Aorta (tissue), 5 donors: ENCODE measurements at regions of chr3 and their contacts with region 1.

Region 1: DNA sequence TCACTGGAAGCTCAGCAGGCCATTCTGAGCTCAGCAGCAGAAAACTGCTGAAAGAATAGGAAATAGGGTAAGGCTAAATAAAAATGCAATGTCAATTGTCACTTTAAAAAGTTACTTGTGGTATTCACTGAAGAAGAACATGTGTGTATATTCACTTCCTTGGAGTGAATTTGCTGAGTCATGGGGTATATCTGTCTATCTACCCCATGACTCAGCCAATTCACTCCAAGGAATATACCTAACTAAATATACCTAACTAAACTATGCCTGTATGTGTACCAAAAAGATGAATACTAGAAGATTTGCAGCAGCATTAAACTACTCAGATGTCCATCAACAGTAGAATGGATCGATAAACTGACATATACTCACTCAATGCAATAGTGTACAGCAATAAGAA is 69.5 kb upstream of the KCNAB1 start:
- DNase-seq: no peak
- ATAC-seq: no peak
- H3K4me3 ChIP-seq: no peak overlapping the region
- H3K27ac ChIP-seq: no peak overlapping the region
- H3K4me1 ChIP-seq: no peaks in the 10 kb centered on the region
- H3K27me3 ChIP-seq: no peaks in the 10 kb centered on the region

Region 2: DNA sequence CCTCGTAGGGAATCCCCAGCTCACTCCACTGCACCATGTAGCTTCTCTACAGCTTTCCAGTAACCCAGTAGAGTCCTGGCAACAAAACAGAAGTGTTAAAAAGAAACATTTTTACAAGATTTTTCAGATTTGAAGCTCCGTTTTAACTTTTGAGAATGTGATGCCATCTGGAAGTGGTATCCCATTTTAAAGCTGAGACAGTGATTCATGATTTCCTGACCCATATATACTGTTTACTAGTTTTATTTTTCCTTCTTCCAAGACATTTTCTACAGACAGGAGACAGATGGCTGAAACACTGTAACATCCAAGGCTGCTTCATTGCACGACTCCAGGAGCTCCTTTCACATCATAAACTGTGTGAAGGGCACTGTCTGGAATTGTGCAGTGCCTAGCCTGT is 39.2 kb after region 1 on chr3:
- intact Hi-C with region 1: no loop called
- DNase-seq: no peak
- ATAC-seq: no peak
- H3K4me3 ChIP-seq: no peak overlapping the region
- H3K27ac ChIP-seq: no peak overlapping the region
- H3K4me1 ChIP-seq: peaks cover 0 to 6% of the 10 kb centered on the region in 2 donors
- H3K27me3 ChIP-seq: no peaks in the 10 kb centered on the region

Region 3: DNA sequence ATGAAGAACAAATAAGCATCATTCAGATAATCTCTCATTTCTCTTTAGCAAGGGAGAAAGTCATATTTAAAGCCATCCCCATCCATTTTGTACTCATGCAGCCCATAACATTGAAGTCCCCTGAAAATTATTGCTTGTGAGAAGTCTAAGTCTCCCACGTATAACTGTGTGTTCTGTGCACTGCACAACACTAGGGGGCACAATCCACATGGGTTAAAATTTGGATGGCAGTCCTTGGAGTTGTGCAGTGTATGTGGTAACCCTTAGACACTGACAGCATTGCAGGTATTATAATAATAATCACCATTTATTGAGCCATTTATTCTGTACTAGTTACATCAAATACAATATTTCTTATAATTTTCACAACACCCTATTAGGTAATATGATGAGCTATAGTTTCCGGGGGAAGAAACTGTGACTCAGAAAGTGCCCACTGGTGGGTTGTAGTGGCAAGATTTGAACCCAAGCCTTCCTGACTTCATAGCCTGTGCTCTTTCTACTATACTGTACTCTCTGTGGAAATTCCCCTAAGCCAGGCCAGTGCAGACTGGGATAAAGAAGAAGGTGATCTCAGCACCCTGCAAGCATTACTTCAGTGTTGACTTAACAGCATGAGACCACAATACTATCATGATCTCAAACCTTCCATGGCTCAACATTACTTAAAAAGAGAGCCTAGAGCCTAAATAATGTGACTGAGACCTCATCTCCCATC is 85.2 kb after region 1 on chr3:
- intact Hi-C with region 1: loop called in 1 of 2 experiments (anchors 5 kb)
- DNase-seq: no peak
- ATAC-seq: no peak
- H3K4me3 ChIP-seq: no peak overlapping the region
- H3K27ac ChIP-seq: no peak overlapping the region
- H3K4me1 ChIP-seq: peaks cover 4 to 7% of the 10 kb centered on the region in 2 donors
- H3K27me3 ChIP-seq: no peaks in the 10 kb centered on the region

Region 4: DNA sequence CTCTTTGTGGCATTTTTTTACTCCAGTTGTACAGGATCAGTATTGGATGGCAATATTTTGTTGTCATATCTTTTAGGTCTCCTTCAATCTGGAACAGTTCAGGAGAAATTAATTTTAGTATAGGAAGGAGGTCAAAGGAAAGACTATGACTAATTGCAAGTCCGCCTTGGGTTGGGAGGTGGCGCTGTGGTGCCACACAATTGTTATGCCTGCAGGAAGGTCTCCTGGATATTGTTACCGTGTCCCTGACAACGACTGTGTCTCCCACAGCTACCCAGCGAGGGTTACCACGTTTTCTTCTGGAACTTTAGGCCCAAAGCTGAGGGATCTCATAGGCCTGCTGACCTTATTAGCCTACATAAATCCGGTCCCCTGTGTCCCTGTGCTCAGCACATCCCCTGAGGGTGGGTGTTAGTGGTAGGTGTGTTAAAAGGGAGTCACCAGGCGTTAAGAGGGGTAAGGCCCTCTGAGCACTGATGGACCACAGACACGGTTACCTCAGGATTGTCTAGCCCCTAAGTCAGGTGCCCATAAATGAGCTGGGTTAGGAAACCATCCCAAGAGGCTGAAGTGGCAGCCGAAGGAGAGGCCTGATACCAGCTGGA is 101.0 kb after region 1 on chr3:
- intact Hi-C with region 1: loop called in 1 of 2 experiments (anchors 5 kb)
- DNase-seq: peak; percentile 81 to 90
- ATAC-seq: peak; percentile 60
- H3K4me3 ChIP-seq: no peak overlapping the region
- H3K27ac ChIP-seq: peak overlapping the region in 1 of 2 donors; percentile 61
- H3K4me1 ChIP-seq: peaks cover 4 to 16% of the 10 kb centered on the region in 2 donors
- H3K27me3 ChIP-seq: no peaks in the 10 kb centered on the region

Region 5: DNA sequence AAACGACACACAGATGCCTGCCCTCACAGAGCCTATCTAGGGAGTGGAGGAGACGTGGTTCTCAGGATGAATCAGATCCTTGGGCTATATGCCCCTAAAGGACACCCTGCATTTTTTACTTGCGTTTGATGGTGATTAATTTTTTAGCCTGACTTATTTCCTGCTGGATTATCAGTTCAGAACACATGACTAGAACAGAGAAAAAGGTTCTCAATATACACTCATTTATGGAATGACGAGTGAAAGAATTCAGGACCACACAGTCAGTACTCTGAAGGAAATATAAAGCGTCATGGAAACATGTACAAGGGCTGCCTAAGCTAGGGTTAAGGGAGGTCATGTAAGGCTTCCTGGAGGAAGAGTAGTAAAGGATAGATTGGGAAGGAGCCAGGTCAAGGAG is 382.2 kb after region 1 on chr3:
- intact Hi-C with region 1: no loop called
- DNase-seq: no peak
- ATAC-seq: no peak
- H3K4me3 ChIP-seq: no peak overlapping the region
- H3K27ac ChIP-seq: no peak overlapping the region
- H3K4me1 ChIP-seq: no peaks in the 10 kb centered on the region
- H3K27me3 ChIP-seq: no peaks in the 10 kb centered on the region